Endothelial cell of umbilical vein (primary cell): ENCODE measurements at regions of chr5 and their contacts with region 1.

Region 1: DNA sequence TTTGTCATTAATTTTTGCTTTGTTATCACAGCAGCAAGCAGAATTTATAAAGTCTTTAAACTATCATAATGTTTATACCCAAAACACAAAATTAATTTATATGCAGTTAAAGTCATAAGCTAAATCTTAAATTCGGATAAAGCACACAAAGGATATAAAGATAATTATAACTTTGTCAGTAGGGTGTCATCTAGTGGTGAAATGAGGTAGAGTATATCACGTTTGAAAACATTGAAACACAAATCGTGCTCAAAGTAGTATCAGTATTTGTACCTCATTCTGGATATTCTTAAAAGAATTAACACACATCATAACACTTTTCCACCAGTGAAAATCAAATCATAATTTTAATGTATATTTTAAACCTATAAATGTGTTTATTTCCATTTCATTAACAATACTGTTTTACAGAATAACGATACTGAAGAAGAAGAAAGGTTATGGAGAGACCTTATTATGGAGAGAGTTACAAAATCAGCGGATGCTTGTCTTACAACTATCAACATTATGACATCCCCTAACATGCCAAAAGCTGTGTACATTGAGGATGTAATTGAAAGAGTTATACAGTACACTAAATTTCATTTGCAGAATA is 129.5 kb downstream of the NIPBL start:
- DNase-seq: peak; percentile 50
- H3K4me3 ChIP-seq: no peak overlapping the region
- H3K27ac ChIP-seq: no peak overlapping the region
- H3K4me1 ChIP-seq: peaks cover 4% of the 10 kb centered on the region
- H3K27me3 ChIP-seq: no peaks in the 10 kb centered on the region
- CTCF ChIP-seq: peak; percentile 27 to 34
- POLR2A ChIP-seq: no peak

Region 2: DNA sequence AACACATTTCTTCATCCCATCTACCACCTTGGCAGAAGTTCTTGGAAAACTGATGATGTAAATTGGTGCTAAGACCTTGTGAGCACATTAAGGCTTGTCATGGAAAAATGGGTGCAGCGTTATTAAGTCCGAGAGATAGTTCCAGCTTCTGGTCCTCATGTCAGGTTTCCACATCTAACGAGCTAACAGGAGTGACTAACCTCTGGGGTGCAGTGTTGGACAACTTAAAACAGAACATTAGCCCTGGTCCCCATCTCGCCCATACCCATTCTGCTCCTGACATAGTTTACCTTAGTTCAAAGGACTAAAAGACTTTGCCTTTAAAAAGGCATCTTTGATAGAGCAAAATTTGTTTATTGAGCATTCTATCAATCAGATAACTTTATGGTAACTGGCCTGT is 271.6 kb before region 1 on chr5:
- CTCF ChIA-PET with region 1: interaction called, 57 read pairs
- POLR2A ChIA-PET with region 1: no interaction called
- dilution Hi-C with region 1: no loop called
- intact Hi-C with region 1: loop called (anchors 1 kb)
- DNase-seq: no peak
- H3K4me3 ChIP-seq: no peak overlapping the region
- H3K27ac ChIP-seq: no peak overlapping the region
- H3K4me1 ChIP-seq: no peaks in the 10 kb centered on the region
- H3K27me3 ChIP-seq: peaks cover 5 to 10% of the 10 kb centered on the region in 2 experiments
- CTCF ChIP-seq: no peak
- POLR2A ChIP-seq: no peak

Region 3: DNA sequence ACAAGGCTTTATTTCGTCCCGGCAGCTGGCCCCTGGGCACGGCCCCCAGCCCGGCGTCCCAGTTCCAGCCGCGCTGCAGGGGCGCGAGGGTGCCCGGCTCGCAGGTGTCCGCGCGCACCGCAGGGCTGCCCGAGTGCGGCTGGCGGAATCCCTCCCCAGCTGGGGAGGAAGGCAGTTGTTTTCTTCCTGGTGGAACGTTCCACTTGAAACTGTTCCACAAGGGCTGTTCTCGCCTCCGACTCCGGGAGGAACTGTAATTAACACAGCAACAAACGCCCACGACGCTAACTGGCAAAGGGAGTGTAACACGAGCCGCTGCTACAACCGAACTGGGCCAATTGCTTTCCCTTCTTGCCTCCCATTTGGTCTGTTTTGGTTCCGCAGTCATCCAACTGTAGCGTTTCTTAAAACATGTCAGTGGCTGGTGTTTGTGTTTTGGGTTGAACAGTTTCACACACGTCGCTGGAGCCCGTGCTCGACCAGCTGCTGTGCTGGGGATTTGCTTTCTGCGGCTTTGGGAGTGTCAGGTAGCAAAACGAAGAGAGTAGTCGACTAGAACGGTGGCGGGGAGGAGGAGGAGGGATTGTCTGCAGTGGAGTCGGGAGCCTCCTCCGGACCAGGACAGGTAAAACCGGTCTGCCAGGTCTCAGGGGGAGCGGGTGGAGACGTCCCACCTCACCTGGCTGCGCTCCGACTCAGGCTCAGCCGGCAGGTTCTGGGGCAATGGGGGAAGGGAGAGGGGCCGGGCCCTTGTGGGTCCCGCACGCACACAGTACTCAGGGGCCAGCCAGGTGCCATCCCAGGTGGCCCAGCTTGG is 261.1 kb before region 1 on chr5:
- CTCF ChIA-PET with region 1: interaction called, 57 read pairs
- POLR2A ChIA-PET with region 1: no interaction called
- dilution Hi-C with region 1: no loop called
- intact Hi-C with region 1: loop called (anchors 2 kb)
- DNase-seq: peak; percentile 68
- H3K4me3 ChIP-seq: peak overlapping the region in 2 of 3 experiments; percentile 39 to 59
- H3K27ac ChIP-seq: no peak overlapping the region
- H3K4me1 ChIP-seq: peaks cover 4% of the 10 kb centered on the region
- H3K27me3 ChIP-seq: peaks cover 25 to 34% of the 10 kb centered on the region in 2 experiments
- CTCF ChIP-seq: no peak
- POLR2A ChIP-seq: no peak

Region 4: DNA sequence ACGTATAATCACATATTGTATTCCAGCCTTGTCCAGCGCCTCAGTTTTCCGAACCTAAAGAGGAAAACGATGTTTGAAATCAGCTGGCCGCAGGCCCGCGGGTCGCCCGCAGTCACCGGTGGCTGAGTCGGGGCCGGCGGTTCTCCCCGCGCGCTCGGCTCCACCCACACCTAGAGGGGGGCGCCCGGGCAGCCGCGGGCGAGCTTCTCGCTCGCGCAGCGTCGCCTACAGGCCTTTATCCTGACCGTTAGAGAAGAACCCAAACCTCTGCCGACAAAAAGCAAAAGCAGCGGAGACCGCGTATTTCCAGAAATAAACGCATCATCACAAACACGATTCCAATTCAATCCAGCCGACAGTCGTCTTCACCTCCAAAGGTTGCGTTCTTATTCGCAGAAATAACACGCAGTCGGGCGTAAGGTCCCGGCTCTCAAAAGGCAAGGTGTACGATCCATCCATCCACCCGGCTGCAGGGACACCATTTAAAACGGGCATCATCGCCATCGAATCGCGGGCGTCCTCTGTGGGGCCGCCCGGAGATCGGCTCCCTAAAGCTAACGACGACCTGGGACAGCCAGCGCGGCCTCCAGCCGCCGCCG is 130.2 kb before region 1 on chr5:
- CTCF ChIA-PET with region 1: interaction called, 9 read pairs
- POLR2A ChIA-PET with region 1: no interaction called
- dilution Hi-C with region 1: no loop called
- intact Hi-C with region 1: loop called (anchors 2 kb)
- DNase-seq: peak; percentile 85
- H3K4me3 ChIP-seq: peak overlapping the region; percentile 80 to 99 (median 92)
- H3K27ac ChIP-seq: peak overlapping the region; percentile 83
- H3K4me1 ChIP-seq: peaks cover 30% of the 10 kb centered on the region
- H3K27me3 ChIP-seq: no peaks in the 10 kb centered on the region
- CTCF ChIP-seq: peak; percentile 43 to 73
- POLR2A ChIP-seq: no peak

Region 5: DNA sequence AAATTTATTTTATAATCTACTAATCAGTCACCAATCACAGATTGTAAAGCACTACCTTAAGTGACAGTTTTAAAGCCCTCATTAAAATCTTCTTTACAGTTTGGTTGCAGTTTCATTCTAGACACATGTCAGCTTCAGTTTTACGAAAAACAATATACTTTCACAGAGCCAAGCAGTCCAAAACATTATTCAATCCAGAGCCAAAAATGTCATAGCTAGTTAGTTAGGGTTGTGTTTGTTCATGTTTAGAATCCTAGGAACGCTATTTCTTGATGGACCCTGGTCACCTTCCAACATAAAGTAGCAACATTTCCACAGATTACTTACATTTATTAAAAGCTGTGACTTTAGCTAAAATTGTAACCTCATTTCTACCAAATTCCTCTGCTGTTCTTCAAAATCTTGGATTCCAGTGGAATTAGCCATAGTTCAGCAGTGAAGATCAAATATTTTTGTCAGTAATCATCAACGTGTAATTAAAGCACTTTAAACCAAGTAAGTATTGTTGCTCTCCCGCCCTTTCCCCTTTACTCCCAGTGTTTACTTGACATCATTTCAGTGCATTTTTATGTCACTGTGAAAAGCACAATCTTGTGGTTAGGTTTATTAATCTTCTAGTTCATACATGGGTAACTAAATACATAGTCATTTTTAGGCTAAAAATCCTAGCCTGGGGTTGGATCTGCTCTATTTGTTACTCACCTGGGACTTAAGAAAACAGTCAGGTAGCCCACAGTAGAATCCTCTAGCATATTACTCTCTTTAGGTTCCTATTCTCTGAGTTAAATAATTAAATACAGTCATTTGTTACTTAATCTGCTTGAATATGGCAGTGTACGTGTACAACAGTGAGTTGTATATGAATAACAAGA is 55.2 kb before region 1 on chr5:
- CTCF ChIA-PET with region 1: interaction called, 22 read pairs
- POLR2A ChIA-PET with region 1: no interaction called
- dilution Hi-C with region 1: no loop called
- intact Hi-C with region 1: no loop called
- DNase-seq: no peak
- H3K4me3 ChIP-seq: no peak overlapping the region
- H3K27ac ChIP-seq: no peak overlapping the region
- H3K4me1 ChIP-seq: peaks cover 4% of the 10 kb centered on the region
- H3K27me3 ChIP-seq: no peaks in the 10 kb centered on the region
- CTCF ChIP-seq: no peak
- POLR2A ChIP-seq: no peak